Activated B cell treated with CpG ODN at 0.5 μM for 24 hours (primary cell): ENCODE measurements at regions of chr6 and their contacts with region 1.

Region 1: GRCh38 chr6:125779924-125780539 is 10.7 kb upstream of the NCOA7 start:
- DNase-seq: peak; percentile 77
- ATAC-seq: peak; percentile 79
- H3K4me3 Mint-ChIP-seq: no peak overlapping the region
- H3K27ac Mint-ChIP-seq: no peak overlapping the region
- H3K4me1 Mint-ChIP-seq: peaks cover 4% of the 10 kb centered on the region
- H3K27me3 Mint-ChIP-seq: no peaks in the 10 kb centered on the region
- CTCF ChIP-seq: no peak

Region 2: DNA sequence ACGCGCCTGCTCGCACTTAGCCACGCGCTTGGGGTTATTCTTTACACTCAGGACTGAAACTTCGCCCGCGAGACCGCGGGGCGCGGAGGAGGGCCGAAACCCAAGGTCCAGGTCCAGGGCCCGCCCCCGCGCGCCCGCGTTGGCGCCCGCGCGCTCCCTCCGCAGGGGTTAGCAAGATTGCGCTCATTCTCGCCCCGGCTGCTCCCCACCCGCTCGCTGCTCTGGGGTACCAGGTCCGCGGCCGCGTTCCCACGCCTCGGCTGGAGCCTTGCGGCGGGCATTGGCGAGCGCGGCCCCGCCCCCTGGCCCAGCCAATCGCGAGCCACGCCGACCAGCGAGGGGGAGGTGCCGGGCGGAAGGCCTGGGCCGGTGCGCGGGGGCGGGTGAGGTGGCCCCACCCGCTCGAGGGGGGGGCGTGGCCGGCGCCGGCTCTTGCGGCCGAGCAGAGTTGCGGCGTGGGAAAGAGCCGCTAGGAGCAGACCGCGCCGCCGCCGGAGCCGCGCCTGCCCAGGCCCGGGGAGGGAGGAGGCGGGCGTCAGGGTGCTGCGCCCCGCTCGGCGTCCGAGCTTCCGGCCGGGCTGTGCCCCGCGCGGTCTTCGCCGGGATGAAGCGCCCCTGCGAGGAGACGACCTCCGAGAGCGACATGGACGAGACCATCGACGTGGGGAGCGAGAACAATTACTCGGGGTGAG is 30.7 kb before region 1 on chr6 and contains the start of gene HEY2:
- CTCF ChIA-PET with region 1: interaction called, 4 read pairs
- POLR2A ChIA-PET with region 1: interaction called, 6 read pairs
- intact Hi-C with region 1: loop called (anchors 1 kb)
- DNase-seq: peak; percentile 92
- ATAC-seq: peak; percentile 91
- H3K4me3 Mint-ChIP-seq: peak within 1 kb of the TSS; percentile 81
- H3K27ac Mint-ChIP-seq: peak within 1 kb of the TSS; percentile 61
- H3K4me1 Mint-ChIP-seq: peaks cover 40% of the 10 kb centered on the region
- H3K27me3 Mint-ChIP-seq: peaks cover 46% of the 10 kb centered on the region
- CTCF ChIP-seq: no peak
- total RNA-seq, gene HEY2: not detected in 2 replicates

Region 3: GRCh38 chr6:125798734-125799508 is 18.9 kb after region 1 on chr6:
- CTCF ChIA-PET with region 1: interaction called, 4 read pairs
- POLR2A ChIA-PET with region 1: interaction called, 23 read pairs
- intact Hi-C with region 1: no loop called
- DNase-seq: no peak
- ATAC-seq: peak; percentile 92
- H3K4me3 Mint-ChIP-seq: peak overlapping the region; percentile 21
- H3K27ac Mint-ChIP-seq: peak overlapping the region; percentile 73
- H3K4me1 Mint-ChIP-seq: peaks cover 63% of the 10 kb centered on the region
- H3K27me3 Mint-ChIP-seq: no peaks in the 10 kb centered on the region
- CTCF ChIP-seq: no peak

Region 4: DNA sequence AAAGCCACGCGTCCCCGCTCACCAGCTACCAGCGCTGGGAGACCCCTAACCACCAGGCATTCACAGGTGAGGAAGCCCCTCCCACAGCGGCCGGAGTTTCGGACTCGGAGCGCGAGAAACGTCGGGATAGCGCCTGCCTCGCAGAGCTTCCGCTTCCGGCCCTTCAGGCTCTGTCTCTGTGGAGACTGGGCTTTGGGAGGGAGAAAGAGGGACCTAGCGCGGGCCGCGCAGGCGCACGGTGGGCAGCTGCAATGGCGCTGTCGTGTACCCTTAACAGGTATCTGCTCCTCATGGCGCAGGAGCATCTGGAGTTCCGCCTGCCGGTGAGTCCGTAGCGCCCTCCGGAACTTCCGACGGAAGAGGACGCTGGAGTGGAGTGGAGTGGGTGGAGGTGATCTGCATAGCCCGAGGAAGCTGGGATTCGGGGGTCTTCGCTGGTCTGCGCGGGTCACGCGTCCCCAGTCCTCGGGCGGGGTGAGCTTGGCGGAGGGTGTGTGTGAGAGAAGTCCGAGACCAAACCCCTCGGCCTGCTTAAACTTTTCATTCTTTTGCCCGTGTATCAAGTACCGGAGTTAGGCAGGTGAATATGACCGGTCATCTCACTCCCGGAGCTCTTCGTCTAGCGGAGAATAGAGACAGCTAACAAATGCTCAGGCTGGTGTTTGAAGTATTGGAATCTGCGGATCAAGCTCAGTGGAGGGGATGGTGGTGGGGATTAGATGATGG is 206.4 kb after region 1 on chr6 and contains the start of gene TRMT11:
- CTCF ChIA-PET with region 1: interaction called, 4 read pairs
- POLR2A ChIA-PET with region 1: interaction called, 12 read pairs
- intact Hi-C with region 1: loop called (anchors 1 kb)
- DNase-seq: peak; percentile 70
- ATAC-seq: peak; percentile 95
- H3K4me3 Mint-ChIP-seq: peak within 1 kb of the TSS; percentile 25
- H3K27ac Mint-ChIP-seq: no peak within 1 kb of the TSS
- H3K4me1 Mint-ChIP-seq: peaks cover 9% of the 10 kb centered on the region
- H3K27me3 Mint-ChIP-seq: no peaks in the 10 kb centered on the region
- CTCF ChIP-seq: no peak
- total RNA-seq, gene TRMT11: 24.6 and 33.4 TPM in 2 replicates